Natural killer cell (primary cell): ENCODE measurements at regions of chr6 and their contacts with region 1.

Region 1: GRCh38 chr6:37207903-37208456 is 38.0 kb downstream of the PIM1 start:
- DNase-seq: peak; percentile 83 to 91
- ATAC-seq: peak; percentile 91
- H3K4me3 ChIP-seq: no peak overlapping the region
- H3K4me3 Mint-ChIP-seq: peak overlapping the region; percentile 28
- H3K27ac ChIP-seq: peak overlapping the region; percentile 37
- H3K27ac Mint-ChIP-seq: peak overlapping the region; percentile 59 to 82
- H3K4me1 ChIP-seq: peaks cover 50% of the 10 kb centered on the region
- H3K4me1 Mint-ChIP-seq: peaks cover 51 to 54% of the 10 kb centered on the region in 2 donors
- H3K27me3 ChIP-seq: no peaks in the 10 kb centered on the region
- H3K27me3 Mint-ChIP-seq: no peaks in the 10 kb centered on the region
- CTCF ChIP-seq: peak; percentile 92

Region 2: GRCh38 chr6:36765594-36766398 is 442.2 kb before region 1 on chr6:
- intact Hi-C with region 1: loop called (anchors 1 kb)
- DNase-seq: peak; percentile 76 to 90
- ATAC-seq: peak; percentile 82 to 93 (median 87)
- H3K4me3 ChIP-seq: no peak overlapping the region
- H3K4me3 Mint-ChIP-seq: peak overlapping the region; percentile 35
- H3K27ac ChIP-seq: no peak overlapping the region
- H3K27ac Mint-ChIP-seq: no peak overlapping the region
- H3K4me1 ChIP-seq: peaks cover 53% of the 10 kb centered on the region
- H3K4me1 Mint-ChIP-seq: peaks cover 30 to 36% of the 10 kb centered on the region in 2 donors
- H3K27me3 ChIP-seq: no peaks in the 10 kb centered on the region
- H3K27me3 Mint-ChIP-seq: no peaks in the 10 kb centered on the region
- CTCF ChIP-seq: peak; percentile 91

Region 3: DNA sequence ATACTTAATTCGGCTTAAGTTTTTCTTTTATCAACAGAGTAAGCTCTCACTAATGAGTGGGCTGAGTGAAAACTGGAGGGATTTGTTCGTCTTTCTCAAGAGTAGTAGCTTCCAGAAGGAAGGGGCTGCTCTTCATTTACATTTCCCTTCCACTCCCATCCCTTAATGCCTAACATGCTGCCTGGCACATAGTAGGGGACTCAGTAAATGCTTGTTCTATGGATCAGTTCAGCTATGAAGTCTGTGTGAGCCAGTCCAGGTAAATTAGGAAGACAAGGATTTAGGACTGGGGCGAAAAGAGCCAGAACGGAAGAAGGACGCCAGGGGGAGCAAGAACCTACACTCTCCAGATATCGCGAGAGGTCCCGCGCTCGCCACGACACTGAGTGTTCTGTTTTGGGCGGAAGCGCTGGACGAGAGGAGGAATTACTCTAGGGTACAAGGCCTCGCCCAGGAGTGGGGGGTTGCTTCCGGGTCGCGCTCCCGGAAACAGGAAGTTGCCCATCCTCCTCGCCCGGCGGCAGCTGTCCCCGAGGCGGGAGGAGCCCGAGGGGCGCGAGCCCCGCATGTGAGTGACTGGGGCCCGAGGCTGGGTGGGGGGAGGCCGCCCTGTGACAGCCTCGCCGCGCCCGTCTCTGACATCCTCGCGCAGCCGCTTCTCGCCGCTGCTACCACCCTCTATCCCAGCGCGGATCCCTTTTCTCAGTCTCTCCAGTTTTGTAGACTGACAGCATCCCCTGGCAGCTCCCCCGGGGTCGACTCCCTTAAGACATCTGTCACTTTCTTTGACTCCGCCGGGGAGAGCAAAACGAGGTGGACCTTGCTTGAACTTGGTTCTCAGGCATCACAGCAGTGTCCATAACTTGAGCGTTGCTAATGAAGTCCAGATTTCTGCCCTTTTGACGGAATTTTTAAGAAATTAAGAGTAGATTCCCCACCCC is 322.2 kb before region 1 on chr6 and contains the start of gene C6orf89:
- intact Hi-C with region 1: loop called (anchors 1 kb)
- DNase-seq: peak; percentile 93 to 99
- ATAC-seq: peak; percentile 97 to 100 (median 98)
- H3K4me3 ChIP-seq: peak within 1 kb of the TSS; percentile 77
- H3K4me3 Mint-ChIP-seq: peak within 1 kb of the TSS; percentile 93
- H3K27ac ChIP-seq: peak within 1 kb of the TSS; percentile 73
- H3K27ac Mint-ChIP-seq: peak within 1 kb of the TSS; percentile 89 to 91
- H3K4me1 ChIP-seq: peaks cover 7% of the 10 kb centered on the region
- H3K4me1 Mint-ChIP-seq: peaks cover 28 to 33% of the 10 kb centered on the region in 2 donors
- H3K27me3 ChIP-seq: no peaks in the 10 kb centered on the region
- H3K27me3 Mint-ChIP-seq: no peaks in the 10 kb centered on the region
- CTCF ChIP-seq: peak; percentile 79
- total RNA-seq, gene C6orf89: 34.3 to 47.0 (median 46.3) TPM

Region 4: GRCh38 chr6:37051138-37052026 is 156.6 kb before region 1 on chr6:
- intact Hi-C with region 1: loop called (anchors 1 kb)
- DNase-seq: peak; percentile 88 to 94
- ATAC-seq: peak; percentile 53 to 80 (median 73)
- H3K4me3 ChIP-seq: no peak overlapping the region
- H3K4me3 Mint-ChIP-seq: peak overlapping the region; percentile 84
- H3K27ac ChIP-seq: peak overlapping the region; percentile 99
- H3K27ac Mint-ChIP-seq: peak overlapping the region; percentile 99 to 100
- H3K4me1 ChIP-seq: peaks cover 61% of the 10 kb centered on the region
- H3K4me1 Mint-ChIP-seq: peaks cover 60 to 63% of the 10 kb centered on the region in 2 donors
- H3K27me3 ChIP-seq: no peaks in the 10 kb centered on the region
- H3K27me3 Mint-ChIP-seq: no peaks in the 10 kb centered on the region
- CTCF ChIP-seq: peak; percentile 85

Region 5: GRCh38 chr6:37077905-37078296 is 130.1 kb before region 1 on chr6:
- intact Hi-C with region 1: no loop called
- DNase-seq: no peak
- ATAC-seq: no peak
- H3K4me3 ChIP-seq: no peak overlapping the region
- H3K4me3 Mint-ChIP-seq: no peak overlapping the region
- H3K27ac ChIP-seq: no peak overlapping the region
- H3K27ac Mint-ChIP-seq: no peak overlapping the region
- H3K4me1 ChIP-seq: peaks cover 4% of the 10 kb centered on the region
- H3K4me1 Mint-ChIP-seq: peaks cover 8 to 14% of the 10 kb centered on the region in 2 donors
- H3K27me3 ChIP-seq: no peaks in the 10 kb centered on the region
- H3K27me3 Mint-ChIP-seq: no peaks in the 10 kb centered on the region
- CTCF ChIP-seq: no peak

Region 6: DNA sequence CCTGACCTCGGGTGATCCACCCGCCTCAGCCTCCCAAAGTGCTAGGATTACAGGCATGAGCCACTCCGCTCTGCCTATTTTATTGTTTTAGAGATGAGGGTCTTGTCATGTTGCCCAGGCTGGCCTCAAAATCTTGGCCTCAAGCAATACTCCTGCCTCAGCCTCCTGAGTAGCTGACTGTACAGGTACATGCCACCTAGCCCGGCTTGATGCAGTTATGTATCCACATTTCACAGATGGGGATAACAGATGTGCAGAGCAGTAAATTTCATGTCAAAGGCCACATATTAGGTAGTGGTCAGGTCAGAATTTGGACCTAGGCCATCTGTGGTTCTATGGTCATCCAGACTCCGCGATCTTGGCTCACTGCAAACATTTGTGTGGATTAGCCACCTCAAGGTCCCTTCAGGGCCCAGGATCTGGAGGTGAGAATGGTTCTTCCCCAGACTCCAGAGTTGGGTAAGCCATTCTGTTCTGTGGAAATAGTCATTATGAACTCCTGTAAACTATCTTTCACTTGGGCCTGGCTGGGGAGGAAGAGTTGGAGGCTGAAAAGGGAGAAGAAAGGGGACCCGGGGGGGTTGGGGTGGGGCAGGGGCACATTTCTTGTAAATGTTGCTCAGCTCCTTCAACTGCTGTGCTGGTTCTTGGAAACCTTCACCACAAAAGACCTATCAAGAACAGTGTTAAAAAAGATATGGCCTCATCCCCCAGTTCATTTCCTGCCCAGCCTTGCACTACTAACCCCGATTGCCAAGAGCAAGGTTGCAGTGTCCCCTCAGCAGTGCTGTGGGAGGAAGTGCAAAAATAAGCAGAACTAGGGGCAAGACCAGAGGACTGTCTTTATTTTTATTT is 25.0 kb before region 1 on chr6:
- intact Hi-C with region 1: loop called (anchors 2 kb)
- DNase-seq: peak; percentile 60 to 82
- ATAC-seq: peak; percentile 93 to 99 (median 98)
- H3K4me3 ChIP-seq: no peak overlapping the region
- H3K4me3 Mint-ChIP-seq: peak overlapping the region; percentile 59
- H3K27ac ChIP-seq: peak overlapping the region; percentile 87
- H3K27ac Mint-ChIP-seq: peak overlapping the region; percentile 73 to 90
- H3K4me1 ChIP-seq: peaks cover 77% of the 10 kb centered on the region
- H3K4me1 Mint-ChIP-seq: peaks cover 32 to 47% of the 10 kb centered on the region in 2 donors
- H3K27me3 ChIP-seq: no peaks in the 10 kb centered on the region
- H3K27me3 Mint-ChIP-seq: no peaks in the 10 kb centered on the region
- CTCF ChIP-seq: no peak